Activated CD4-positive, alpha-beta memory T cell treated with anti-CD3 and anti-CD28 coated beads for 36 hours (primary cell): ENCODE measurements at regions of chr11 and their contacts with region 1.

Region 1: DNA sequence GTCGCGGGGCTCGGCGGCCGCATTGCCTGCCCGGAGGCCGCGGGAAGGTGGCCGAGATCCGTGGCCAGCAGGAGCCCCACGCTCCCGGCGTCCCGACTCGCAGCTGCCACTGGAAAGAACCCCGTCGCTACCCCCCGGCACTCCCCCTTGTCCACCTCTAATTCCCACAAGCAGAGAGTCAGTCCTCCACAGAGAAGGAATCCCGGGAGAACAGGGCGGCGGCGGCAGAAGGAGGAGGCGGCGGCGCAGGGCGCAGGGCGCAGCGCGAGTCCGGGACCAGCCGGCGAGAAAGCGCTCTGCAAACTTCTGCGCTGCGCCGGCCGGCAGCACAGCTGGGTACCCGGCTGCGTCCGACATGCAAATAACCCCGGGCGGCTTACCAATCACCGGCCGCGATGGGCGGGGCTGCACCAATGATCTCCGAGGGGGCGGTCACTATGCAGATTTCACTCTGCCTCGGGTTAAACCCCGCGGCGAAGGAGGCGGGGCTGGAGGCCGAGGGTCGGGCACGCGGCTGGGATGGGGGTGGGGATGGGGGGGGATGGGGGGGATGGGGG is at the start of gene ABTB2:
- DNase-seq: peak; percentile 98
- H3K4me3 Mint-ChIP-seq: peak within 1 kb of the TSS; percentile 77
- H3K27ac Mint-ChIP-seq: no peak within 1 kb of the TSS
- H3K4me1 Mint-ChIP-seq: peaks cover 28% of the 10 kb centered on the region
- H3K27me3 Mint-ChIP-seq: peaks cover 37% of the 10 kb centered on the region
- total RNA-seq, gene ABTB2: 1.8 to 1.9 TPM

Region 2: DNA sequence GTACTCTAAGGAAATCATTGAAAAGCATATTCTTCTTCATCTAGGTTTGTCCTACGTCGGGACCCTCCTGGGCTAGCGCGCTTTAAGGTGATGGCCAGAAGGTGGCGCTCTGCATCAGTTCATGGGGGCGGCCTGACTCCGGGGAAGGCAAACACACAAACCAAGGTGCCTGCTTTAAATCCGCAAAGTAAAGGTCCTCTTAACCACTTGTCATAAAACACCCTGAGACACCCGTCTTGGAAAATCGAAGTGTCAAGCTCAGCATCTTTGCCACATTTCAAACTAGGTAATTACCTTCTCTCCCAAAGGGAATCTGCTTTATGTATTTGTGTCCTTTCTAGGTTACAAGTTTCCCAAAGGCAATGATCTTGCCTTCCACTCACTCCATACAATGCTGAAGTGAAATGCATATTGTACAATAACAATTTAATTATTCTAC is 499.8 kb before region 1 on chr11:
- CTCF ChIA-PET with region 1: no interaction called
- POLR2A ChIA-PET with region 1: no interaction called
- intact Hi-C with region 1: loop called (anchors 1 kb)
- DNase-seq: peak; percentile 81
- H3K4me3 Mint-ChIP-seq: no peak overlapping the region
- H3K27ac Mint-ChIP-seq: no peak overlapping the region
- H3K4me1 Mint-ChIP-seq: no peaks in the 10 kb centered on the region
- H3K27me3 Mint-ChIP-seq: peaks cover 37% of the 10 kb centered on the region

Region 3: DNA sequence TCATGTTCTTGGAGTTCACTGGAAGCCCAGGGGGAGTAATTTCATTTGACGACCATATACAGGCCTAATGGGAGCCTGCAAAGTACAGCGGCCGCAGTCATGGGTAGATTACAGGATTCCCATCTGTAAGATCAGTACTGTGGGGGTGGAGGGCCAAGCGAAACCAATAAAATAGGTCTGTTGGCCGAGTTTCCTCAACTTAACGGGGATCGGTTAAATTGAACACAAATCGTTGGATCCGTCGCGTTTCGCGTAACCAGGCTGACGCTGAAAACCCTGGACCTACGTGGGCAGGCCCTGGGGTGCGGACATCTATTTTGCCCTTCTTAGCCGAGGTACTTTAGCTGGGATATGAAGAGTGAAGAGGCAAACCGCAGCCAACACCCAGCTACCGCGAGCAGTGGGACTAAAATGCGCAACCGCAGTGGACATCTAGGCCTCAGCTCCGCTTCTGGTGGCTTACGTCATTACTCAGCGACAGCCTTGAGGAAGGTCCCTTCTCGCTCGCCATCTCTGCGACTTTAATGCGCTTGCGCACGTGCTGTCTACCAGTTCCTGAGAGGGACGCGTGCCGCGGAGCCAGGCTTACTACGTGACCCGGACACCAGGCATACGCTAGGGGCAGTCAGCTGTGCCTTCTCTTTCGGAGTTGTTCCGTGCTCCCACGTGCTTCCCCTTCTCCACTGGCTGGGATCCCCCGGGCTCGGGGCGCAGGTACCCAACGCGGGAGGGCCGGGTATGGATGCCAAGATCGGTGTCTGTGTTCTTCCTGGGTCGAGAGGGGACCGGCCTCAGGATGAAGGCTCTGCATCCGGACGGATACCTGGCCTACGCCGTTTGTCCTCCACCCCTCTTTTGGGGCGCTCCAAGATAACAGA is 252.5 kb before region 1 on chr11 and contains the start of gene NAT10:
- CTCF ChIA-PET with region 1: interaction called, 4 read pairs
- POLR2A ChIA-PET with region 1: interaction called, 6 read pairs
- intact Hi-C with region 1: loop called (anchors 1 kb)
- DNase-seq: peak; percentile 98
- H3K4me3 Mint-ChIP-seq: peak within 1 kb of the TSS; percentile 95
- H3K27ac Mint-ChIP-seq: peak within 1 kb of the TSS; percentile 98
- H3K4me1 Mint-ChIP-seq: peaks cover 45% of the 10 kb centered on the region
- H3K27me3 Mint-ChIP-seq: peaks cover 4% of the 10 kb centered on the region
- total RNA-seq, gene NAT10: 84.7 to 87.6 TPM

Region 4: DNA sequence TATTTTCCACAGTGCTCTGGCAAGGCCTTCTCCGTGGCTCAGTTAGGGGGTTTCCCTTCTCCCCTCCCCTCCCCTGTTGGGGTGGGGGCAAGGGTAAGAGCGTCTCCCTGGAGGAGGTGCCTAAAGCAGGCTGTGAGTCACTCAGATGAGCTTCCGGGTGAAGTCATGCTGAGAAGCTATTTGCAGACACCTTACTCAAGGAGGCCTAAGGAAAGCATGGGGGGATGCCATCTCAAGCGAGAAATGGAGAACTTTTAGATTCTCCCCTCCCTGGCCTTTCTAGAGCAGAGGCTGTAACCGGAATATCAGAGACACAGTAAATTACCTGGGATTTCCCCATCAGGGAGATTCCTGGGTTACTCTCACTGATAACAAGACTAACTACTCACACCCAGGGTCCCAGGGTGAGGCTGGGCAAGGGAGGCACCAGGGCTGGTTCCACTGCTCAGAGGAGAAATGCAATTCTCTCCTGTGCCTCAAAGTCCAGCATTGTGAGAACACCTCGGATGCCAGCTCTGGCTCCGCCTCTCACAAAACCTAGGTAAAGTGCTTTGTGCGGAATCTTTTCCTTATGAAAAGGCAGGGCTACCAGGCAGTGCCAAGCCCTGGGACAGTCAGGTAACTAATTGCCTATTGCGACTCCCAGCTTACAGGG is 123.6 kb before region 1 on chr11:
- CTCF ChIA-PET with region 1: interaction called, 5 read pairs
- POLR2A ChIA-PET with region 1: interaction called, 4 read pairs
- intact Hi-C with region 1: loop called (anchors 1 kb)
- DNase-seq: peak; percentile 90
- H3K4me3 Mint-ChIP-seq: no peak overlapping the region
- H3K27ac Mint-ChIP-seq: peak overlapping the region; percentile 77
- H3K4me1 Mint-ChIP-seq: peaks cover 46% of the 10 kb centered on the region
- H3K27me3 Mint-ChIP-seq: peaks cover 6% of the 10 kb centered on the region

Region 5: GRCh38 chr11:34387653-34388052 is 29.9 kb after region 1 on chr11:
- CTCF ChIA-PET with region 1: no interaction called
- POLR2A ChIA-PET with region 1: no interaction called
- intact Hi-C with region 1: no loop called
- DNase-seq: no peak
- H3K4me3 Mint-ChIP-seq: no peak overlapping the region
- H3K27ac Mint-ChIP-seq: no peak overlapping the region
- H3K4me1 Mint-ChIP-seq: no peaks in the 10 kb centered on the region
- H3K27me3 Mint-ChIP-seq: peaks cover 24% of the 10 kb centered on the region

Region 6: GRCh38 chr11:34468209-34468841 is 110.5 kb after region 1 on chr11:
- CTCF ChIA-PET with region 1: interaction called, 10 read pairs
- POLR2A ChIA-PET with region 1: no interaction called
- intact Hi-C with region 1: no loop called
- DNase-seq: peak; percentile 67
- H3K4me3 Mint-ChIP-seq: no peak overlapping the region
- H3K27ac Mint-ChIP-seq: no peak overlapping the region
- H3K4me1 Mint-ChIP-seq: peaks cover 7% of the 10 kb centered on the region
- H3K27me3 Mint-ChIP-seq: no peaks in the 10 kb centered on the region